ENCODE measurements at regions of chr5 and their contacts with region 1.

Region 1: DNA sequence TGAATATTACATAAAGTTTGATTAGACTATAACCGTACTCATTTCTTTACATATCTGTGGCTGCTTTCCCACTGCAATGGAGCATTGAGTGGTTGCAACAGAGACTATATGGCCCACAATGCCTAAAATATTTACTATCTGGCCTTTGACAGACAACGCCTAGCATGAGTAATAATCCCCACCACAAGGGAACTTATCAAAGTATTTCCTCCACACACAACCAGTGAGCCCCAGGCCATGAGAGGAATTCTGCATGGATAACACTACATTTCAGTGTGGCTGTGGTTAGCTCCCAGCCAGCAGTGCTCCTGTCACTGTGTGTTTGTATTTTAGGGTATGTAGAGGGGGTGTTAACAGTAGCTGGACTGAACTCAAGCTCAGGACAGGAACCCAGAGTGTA is 54.8 kb downstream of the FAM81B start:
- DNase-seq: peak; percentile 66 to 93
- H3K4me3 ChIP-seq: no peak overlapping the region
- H3K27ac ChIP-seq: peak overlapping the region; percentile 76
- H3K4me1 ChIP-seq: peaks cover 28% of the 10 kb centered on the region
- H3K27me3 ChIP-seq: no peaks in the 10 kb centered on the region
- CTCF ChIP-seq: no peak

Region 2: DNA sequence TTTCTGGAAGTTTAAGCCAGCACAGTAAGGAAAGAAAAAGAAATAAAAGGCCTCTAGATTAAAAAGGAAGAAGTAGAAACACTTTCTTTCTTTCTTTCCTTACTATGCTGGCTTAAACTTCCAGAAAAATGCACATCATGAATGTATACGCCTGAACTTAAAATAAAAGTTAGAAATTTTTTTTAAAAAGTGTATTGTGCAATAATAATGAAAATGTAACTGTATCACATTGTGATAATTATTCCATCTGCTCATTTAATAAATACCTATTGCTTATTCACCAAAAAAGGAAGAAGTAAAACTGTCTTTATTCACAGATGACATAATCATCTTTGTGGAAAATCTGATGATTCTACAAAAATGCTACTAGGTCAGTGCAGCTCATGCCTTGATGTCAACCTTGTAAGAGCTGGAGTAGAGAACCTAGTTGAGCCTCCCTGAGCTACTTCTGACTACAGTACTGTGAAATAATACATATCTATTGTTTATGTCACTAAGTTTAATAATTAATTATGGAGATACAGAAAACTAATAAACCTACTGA is 210.5 kb before region 1 on chr5:
- CTCF ChIA-PET with region 1: no interaction called
- POLR2A ChIA-PET with region 1: no interaction called
- intact Hi-C with region 1: no loop called
- DNase-seq: no peak
- H3K4me3 ChIP-seq: no peak overlapping the region
- H3K27ac ChIP-seq: no peak overlapping the region
- H3K4me1 ChIP-seq: no peaks in the 10 kb centered on the region
- H3K27me3 ChIP-seq: no peaks in the 10 kb centered on the region
- CTCF ChIP-seq: no peak

Region 3: GRCh38 chr5:95392593-95393182 is 53.3 kb before region 1 on chr5:
- CTCF ChIA-PET with region 1: no interaction called
- POLR2A ChIA-PET with region 1: interaction called, 3 read pairs
- intact Hi-C with region 1: loop called (anchors 5 kb)
- DNase-seq: peak; percentile 52 to 78
- H3K4me3 ChIP-seq: no peak overlapping the region
- H3K27ac ChIP-seq: no peak overlapping the region
- H3K4me1 ChIP-seq: peaks cover 6% of the 10 kb centered on the region; the same call in 1 of the 2 replicates
- H3K27me3 ChIP-seq: no peaks in the 10 kb centered on the region
- CTCF ChIP-seq: no peak

Region 4: GRCh38 chr5:95519151-95519550 is 73.1 kb after region 1 on chr5:
- CTCF ChIA-PET with region 1: no interaction called
- POLR2A ChIA-PET with region 1: interaction called, 10 read pairs
- intact Hi-C with region 1: no loop called
- DNase-seq: no peak
- H3K4me3 ChIP-seq: no peak overlapping the region
- H3K27ac ChIP-seq: no peak overlapping the region
- H3K4me1 ChIP-seq: no peaks in the 10 kb centered on the region
- H3K27me3 ChIP-seq: no peaks in the 10 kb centered on the region
- CTCF ChIP-seq: no peak

Region 5: DNA sequence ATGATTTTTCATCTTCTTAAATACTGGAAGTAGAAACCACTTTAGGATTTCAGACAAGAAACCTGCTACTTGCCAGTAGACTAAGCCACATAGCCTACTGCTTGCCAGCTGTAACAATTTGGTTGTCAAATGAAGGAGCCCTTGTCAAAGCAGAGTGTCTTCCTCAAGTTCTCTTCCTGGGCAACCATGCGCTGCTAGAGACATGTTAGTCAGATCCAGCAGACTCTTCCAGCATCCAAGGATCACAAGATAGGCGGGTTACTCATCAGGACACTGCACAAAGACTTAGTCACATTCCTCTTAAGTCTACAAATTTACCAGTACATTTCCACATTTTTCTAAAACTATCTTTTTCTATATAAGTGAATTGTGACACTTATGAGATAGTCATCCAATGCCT is 84.4 kb after region 1 on chr5:
- CTCF ChIA-PET with region 1: no interaction called
- POLR2A ChIA-PET with region 1: no interaction called
- intact Hi-C with region 1: no loop called
- DNase-seq: no peak
- H3K4me3 ChIP-seq: no peak overlapping the region
- H3K27ac ChIP-seq: no peak overlapping the region
- H3K4me1 ChIP-seq: no peaks in the 10 kb centered on the region
- H3K27me3 ChIP-seq: no peaks in the 10 kb centered on the region
- CTCF ChIP-seq: no peak

Region 6: GRCh38 chr5:95583992-95584391 is 138.0 kb after region 1 on chr5:
- CTCF ChIA-PET with region 1: no interaction called
- POLR2A ChIA-PET with region 1: interaction called, 11 read pairs
- intact Hi-C with region 1: no loop called
- DNase-seq: no peak
- H3K4me3 ChIP-seq: no peak overlapping the region
- H3K27ac ChIP-seq: no peak overlapping the region
- H3K4me1 ChIP-seq: no peaks in the 10 kb centered on the region
- H3K27me3 ChIP-seq: no peaks in the 10 kb centered on the region
- CTCF ChIP-seq: no peak